T-cell (primary cell): ENCODE measurements at regions of chr2 and their contacts with region 1.

Region 1: GRCh38 chr2:30239308-30239985 is 8.1 kb downstream of the LBH start:
- DNase-seq: peak; percentile 51 to 92 (median 71)
- ATAC-seq: peak; percentile 43 to 68 (median 55)
- H3K4me3 ChIP-seq: peak overlapping the region in 1 of 2 donors; percentile 2
- H3K4me3 Mint-ChIP-seq: peak overlapping the region; percentile 64 to 98 (median 79)
- H3K27ac ChIP-seq: peak overlapping the region; percentile 40
- H3K27ac Mint-ChIP-seq: peak overlapping the region; percentile 82 to 96
- H3K4me1 ChIP-seq: peaks cover 64 to 90% of the 10 kb centered on the region in 2 experiments
- H3K4me1 Mint-ChIP-seq: peaks cover 89 to 95% (median 93%) of the 10 kb centered on the region in 3 donors
- H3K27me3 ChIP-seq: no peaks in the 10 kb centered on the region
- H3K27me3 Mint-ChIP-seq: no peaks in the 10 kb centered on the region

Region 2: DNA sequence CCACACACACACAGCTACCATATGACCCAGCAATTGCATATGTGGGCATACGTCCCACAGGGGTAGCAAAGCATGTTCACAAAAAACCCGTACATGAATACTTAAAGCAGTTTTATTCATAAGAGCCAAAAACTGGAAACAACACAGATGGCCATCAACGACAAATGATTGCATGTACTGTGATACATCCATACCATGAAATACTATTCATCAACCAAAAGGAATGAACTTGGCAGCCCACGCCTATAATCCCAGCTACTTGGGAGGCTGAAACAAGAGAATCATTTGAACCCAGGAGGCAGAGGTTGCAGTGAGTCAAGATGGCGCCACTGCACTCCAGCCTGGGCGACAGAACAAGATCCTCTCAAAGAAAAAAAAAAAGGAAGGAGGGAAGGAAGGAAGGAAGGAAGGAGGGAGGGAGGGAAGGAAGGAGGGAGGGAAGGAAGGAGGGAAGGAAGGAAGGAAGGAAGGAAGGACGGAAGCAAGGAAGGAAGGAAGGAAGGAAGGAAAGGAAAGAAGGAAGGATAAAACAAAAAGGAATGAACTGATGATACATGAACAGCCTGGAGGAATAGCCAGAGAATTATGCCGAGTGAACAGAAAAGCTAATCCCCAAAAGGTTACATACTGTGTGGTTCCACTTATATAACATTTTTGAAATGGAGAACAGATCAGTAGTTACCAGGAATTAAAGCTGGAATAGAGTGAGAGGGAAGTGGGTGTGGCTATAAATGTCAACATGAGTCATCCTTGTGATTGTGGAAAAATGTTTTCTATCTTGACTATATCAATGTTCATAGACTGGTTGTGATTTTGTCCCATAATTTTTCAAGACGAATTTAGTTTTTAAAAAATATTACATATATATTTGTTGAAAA is 112.2 kb before region 1 on chr2:
- CTCF ChIA-PET with region 1: no interaction called
- POLR2A ChIA-PET with region 1: no interaction called
- DNase-seq: no peak
- ATAC-seq: no peak
- H3K4me3 ChIP-seq: no peak overlapping the region
- H3K4me3 Mint-ChIP-seq: no peak overlapping the region
- H3K27ac ChIP-seq: no peak overlapping the region
- H3K27ac Mint-ChIP-seq: no peak overlapping the region
- H3K4me1 ChIP-seq: no peaks in the 10 kb centered on the region
- H3K4me1 Mint-ChIP-seq: no peaks in the 10 kb centered on the region
- H3K27me3 ChIP-seq: peaks cover 0 to 10% of the 10 kb centered on the region in 2 experiments
- H3K27me3 Mint-ChIP-seq: peaks cover 0 to 5% of the 10 kb centered on the region in 2 donors

Region 3: GRCh38 chr2:30225131-30225762 is 14.2 kb before region 1 on chr2:
- CTCF ChIA-PET with region 1: interaction called, 22 to 23 read pairs
- POLR2A ChIA-PET with region 1: interaction called, 4 read pairs
- DNase-seq: peak in 32 of 35 experiments; percentile 21 to 78 (median 46)
- ATAC-seq: peak; percentile 83 to 86 (median 86)
- H3K4me3 ChIP-seq: peak overlapping the region; percentile 50 to 67
- H3K4me3 Mint-ChIP-seq: peak overlapping the region; percentile 85 to 97 (median 95)
- H3K27ac ChIP-seq: peak overlapping the region; percentile 96
- H3K27ac Mint-ChIP-seq: peak overlapping the region; percentile 98 to 100
- H3K4me1 ChIP-seq: peaks cover 44 to 72% of the 10 kb centered on the region in 2 experiments
- H3K4me1 Mint-ChIP-seq: peaks cover 77 to 84% (median 80%) of the 10 kb centered on the region in 3 donors
- H3K27me3 ChIP-seq: no peaks in the 10 kb centered on the region
- H3K27me3 Mint-ChIP-seq: no peaks in the 10 kb centered on the region

Region 4: GRCh38 chr2:30266051-30266621 is 26.7 kb after region 1 on chr2:
- CTCF ChIA-PET with region 1: interaction called, 4 to 8 read pairs
- POLR2A ChIA-PET with region 1: interaction called, 7 to 13 read pairs
- DNase-seq: peak; percentile 59 to 83 (median 71)
- ATAC-seq: peak; percentile 94 to 96 (median 96)
- H3K4me3 ChIP-seq: peak overlapping the region; percentile 34 to 50
- H3K4me3 Mint-ChIP-seq: peak overlapping the region; percentile 73 to 80 (median 79)
- H3K27ac ChIP-seq: peak overlapping the region; percentile 89
- H3K27ac Mint-ChIP-seq: peak overlapping the region; percentile 99
- H3K4me1 ChIP-seq: peaks cover 45 to 58% of the 10 kb centered on the region in 2 experiments
- H3K4me1 Mint-ChIP-seq: peaks cover 80 to 91% (median 84%) of the 10 kb centered on the region in 3 donors
- H3K27me3 ChIP-seq: no peaks in the 10 kb centered on the region
- H3K27me3 Mint-ChIP-seq: no peaks in the 10 kb centered on the region

Region 5: GRCh38 chr2:30346471-30347169 is 107.2 kb after region 1 on chr2:
- CTCF ChIA-PET with region 1: interaction called in 1 of 2 experiments, 11 read pairs
- POLR2A ChIA-PET with region 1: no interaction called
- DNase-seq: no peak
- ATAC-seq: no peak
- H3K4me3 ChIP-seq: no peak overlapping the region
- H3K4me3 Mint-ChIP-seq: no peak overlapping the region
- H3K27ac ChIP-seq: no peak overlapping the region
- H3K27ac Mint-ChIP-seq: no peak overlapping the region
- H3K4me1 ChIP-seq: no peaks in the 10 kb centered on the region
- H3K4me1 Mint-ChIP-seq: peaks cover 4 to 7% (median 6%) of the 10 kb centered on the region in 3 donors
- H3K27me3 ChIP-seq: no peaks in the 10 kb centered on the region
- H3K27me3 Mint-ChIP-seq: no peaks in the 10 kb centered on the region

Region 6: DNA sequence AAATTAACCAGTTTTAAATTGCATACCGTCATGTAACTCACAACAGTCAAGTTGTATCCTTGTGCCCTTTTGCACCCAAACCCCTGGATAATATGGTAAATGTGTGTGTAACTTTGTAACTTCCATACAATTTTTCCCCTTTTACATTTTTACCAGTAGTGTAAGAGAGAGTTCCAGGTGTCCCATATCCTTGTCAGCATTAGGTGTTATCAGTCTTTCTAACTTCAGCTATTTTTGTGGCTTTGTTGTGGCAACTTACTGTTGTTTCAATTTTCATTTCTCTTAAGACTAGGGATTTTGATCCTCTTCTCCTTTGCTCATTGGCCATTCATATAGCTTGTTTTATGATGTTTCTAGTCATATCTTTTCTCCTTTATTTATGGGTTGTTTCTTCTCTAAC is 302.2 kb after region 1 on chr2:
- CTCF ChIA-PET with region 1: no interaction called
- POLR2A ChIA-PET with region 1: no interaction called
- DNase-seq: peak in 1 of 35 experiments; percentile 2
- ATAC-seq: no peak
- H3K4me3 ChIP-seq: no peak overlapping the region
- H3K4me3 Mint-ChIP-seq: no peak overlapping the region
- H3K27ac ChIP-seq: no peak overlapping the region
- H3K27ac Mint-ChIP-seq: no peak overlapping the region
- H3K4me1 ChIP-seq: no peaks in the 10 kb centered on the region
- H3K4me1 Mint-ChIP-seq: peaks cover 19 to 40% (median 26%) of the 10 kb centered on the region in 3 donors
- H3K27me3 ChIP-seq: no peaks in the 10 kb centered on the region
- H3K27me3 Mint-ChIP-seq: no peaks in the 10 kb centered on the region